CD4-positive, alpha-beta T cell (primary cell): ENCODE measurements at regions of chr12 and their contacts with region 1.

Region 1: GRCh38 chr12:100266835-100267618 is at the starts of genes DEPDC4 and SCYL2:
- DNase-seq: peak; percentile 88 to 97 (median 93)
- ATAC-seq: peak; percentile 90
- H3K4me3 ChIP-seq: peak within 1 kb of the TSS; percentile 85
- H3K4me3 Mint-ChIP-seq: peak within 1 kb of the TSS; percentile 98
- H3K27ac ChIP-seq: peak within 1 kb of the TSS; percentile 72 to 86
- H3K27ac Mint-ChIP-seq: peak within 1 kb of the TSS; percentile 96
- H3K4me1 ChIP-seq: peaks cover 12% of the 10 kb centered on the region
- H3K4me1 Mint-ChIP-seq: peaks cover 42% of the 10 kb centered on the region
- H3K27me3 ChIP-seq: no peaks in the 10 kb centered on the region
- H3K27me3 Mint-ChIP-seq: no peaks in the 10 kb centered on the region
- CTCF ChIP-seq: no peak
- total RNA-seq, gene DEPDC4: 0.27 to 0.50 TPM
- total RNA-seq, gene SCYL2: 37.5 to 40.8 TPM

Region 2: DNA sequence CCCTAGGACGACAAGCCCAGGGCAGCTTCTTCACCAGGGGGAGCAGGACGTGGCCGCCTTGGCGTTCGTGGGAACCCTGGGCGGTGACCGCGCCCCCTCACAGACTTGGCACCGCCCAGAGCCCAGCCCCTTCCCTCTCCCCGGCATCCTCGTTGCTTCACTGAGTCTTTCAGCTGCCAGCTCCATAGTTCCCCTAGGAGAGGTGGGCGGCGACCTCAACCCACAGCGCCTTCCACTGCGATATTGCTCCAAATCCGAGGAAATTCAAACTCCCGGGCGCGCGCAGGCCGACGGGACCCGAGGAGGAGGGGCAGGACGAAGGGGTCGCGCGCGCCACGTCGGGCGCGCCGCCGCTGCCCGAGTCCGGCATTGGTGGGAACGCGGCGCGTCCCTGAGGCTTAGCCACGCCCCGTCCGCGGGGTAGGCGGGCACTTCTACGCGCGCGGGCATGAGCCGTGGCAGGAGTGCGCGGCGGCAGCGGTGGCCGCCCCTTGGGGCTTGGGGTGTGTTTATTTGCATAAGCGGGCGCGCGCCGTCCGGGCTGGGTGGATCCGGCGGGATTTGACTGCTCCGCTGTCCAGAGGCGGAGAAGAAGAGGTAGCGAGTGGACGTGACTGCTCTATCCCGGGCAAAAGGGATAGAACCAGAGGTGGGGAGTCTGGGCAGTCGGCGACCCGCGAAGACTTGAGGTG is 1622.2 kb before region 1 on chr12 and contains the starts of genes APAF1 and IKBIP:
- CTCF ChIA-PET with region 1: no interaction called
- POLR2A ChIA-PET with region 1: no interaction called
- intact Hi-C with region 1: loop called in 1 of 2 experiments (anchors 10 kb)
- DNase-seq: peak; percentile 91 to 98 (median 97)
- ATAC-seq: peak; percentile 91
- H3K4me3 ChIP-seq: peak within 1 kb of the TSS; percentile 89
- H3K4me3 Mint-ChIP-seq: peak within 1 kb of the TSS; percentile 99
- H3K27ac ChIP-seq: peak within 1 kb of the TSS; percentile 55 to 71
- H3K27ac Mint-ChIP-seq: peak within 1 kb of the TSS; percentile 91
- H3K4me1 ChIP-seq: peaks cover 22% of the 10 kb centered on the region
- H3K4me1 Mint-ChIP-seq: peaks cover 32% of the 10 kb centered on the region
- H3K27me3 ChIP-seq: no peaks in the 10 kb centered on the region
- H3K27me3 Mint-ChIP-seq: no peaks in the 10 kb centered on the region
- CTCF ChIP-seq: no peak
- total RNA-seq, gene APAF1: 13.5 to 14.5 TPM
- total RNA-seq, gene IKBIP: 0.56 to 0.82 TPM

Region 3: DNA sequence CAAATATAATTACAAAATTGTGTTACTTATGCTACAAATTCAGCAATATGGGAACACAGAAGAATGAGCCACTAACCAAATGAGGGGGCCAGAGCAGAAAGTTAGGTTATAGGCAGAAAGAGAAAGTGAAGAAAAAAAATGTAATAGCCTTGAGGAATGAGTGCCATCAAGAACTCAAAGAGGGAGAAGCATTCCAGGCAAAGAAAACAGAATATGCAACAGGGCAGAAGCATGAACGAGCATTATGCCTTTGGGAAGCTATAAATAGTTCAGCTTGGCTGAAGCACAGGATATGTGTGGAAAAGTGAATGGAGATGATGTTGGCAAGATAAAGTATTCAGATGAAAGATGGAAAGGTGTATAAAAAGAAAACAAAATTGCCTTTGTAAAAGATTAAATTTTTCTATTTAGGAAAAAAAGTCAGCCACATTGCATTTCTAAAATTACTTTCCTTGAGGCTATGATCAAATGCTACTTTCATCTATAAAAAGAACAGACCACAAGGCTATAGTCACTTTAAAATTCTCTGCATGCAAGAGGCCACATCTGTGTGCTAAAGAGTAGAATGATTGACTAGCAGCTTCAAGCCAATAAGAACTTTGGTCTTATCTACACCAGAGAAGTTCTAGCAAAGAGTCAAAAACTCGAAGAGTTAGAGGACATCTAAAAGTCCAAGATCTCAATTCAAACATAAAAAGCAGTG is 813.0 kb before region 1 on chr12:
- CTCF ChIA-PET with region 1: no interaction called
- POLR2A ChIA-PET with region 1: no interaction called
- intact Hi-C with region 1: no loop called
- DNase-seq: no peak
- ATAC-seq: no peak
- H3K4me3 ChIP-seq: no peak overlapping the region
- H3K4me3 Mint-ChIP-seq: no peak overlapping the region
- H3K27ac ChIP-seq: no peak overlapping the region
- H3K27ac Mint-ChIP-seq: no peak overlapping the region
- H3K4me1 ChIP-seq: no peaks in the 10 kb centered on the region
- H3K4me1 Mint-ChIP-seq: no peaks in the 10 kb centered on the region
- H3K27me3 ChIP-seq: no peaks in the 10 kb centered on the region
- H3K27me3 Mint-ChIP-seq: no peaks in the 10 kb centered on the region
- CTCF ChIP-seq: no peak

Region 4: DNA sequence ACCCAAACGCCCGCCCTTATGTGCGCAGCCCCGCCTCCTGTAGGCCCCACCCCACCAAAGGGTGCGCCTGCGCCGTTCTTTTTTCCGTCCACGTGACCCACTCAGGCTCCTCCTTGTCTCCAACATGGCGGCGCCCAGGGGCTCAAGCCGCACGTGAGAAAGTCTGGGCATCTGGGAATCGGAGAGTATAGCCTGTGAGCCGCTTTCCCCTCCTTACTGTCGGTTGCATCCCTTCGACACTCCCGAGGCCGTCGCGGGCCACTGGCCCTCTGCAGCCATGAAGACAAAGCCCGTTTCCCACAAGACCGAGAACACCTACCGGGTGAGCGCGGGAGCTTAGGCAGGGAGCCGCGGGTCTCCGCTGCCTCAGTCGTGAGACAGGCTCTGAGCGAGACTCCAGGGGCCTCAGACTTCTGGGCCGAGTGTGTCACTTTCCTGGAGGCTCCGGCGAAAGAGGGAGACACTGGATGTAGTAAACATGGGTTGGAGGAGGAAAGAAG is 1013.0 kb after region 1 on chr12 and contains the start of gene UTP20:
- CTCF ChIA-PET with region 1: no interaction called
- POLR2A ChIA-PET with region 1: interaction called, 7 read pairs
- intact Hi-C with region 1: loop called in 1 of 2 experiments (anchors 2 kb)
- DNase-seq: peak; percentile 89 to 96 (median 94)
- ATAC-seq: peak; percentile 100
- H3K4me3 ChIP-seq: peak within 1 kb of the TSS; percentile 72
- H3K4me3 Mint-ChIP-seq: peak within 1 kb of the TSS; percentile 97
- H3K27ac ChIP-seq: no peak within 1 kb of the TSS
- H3K27ac Mint-ChIP-seq: peak within 1 kb of the TSS; percentile 71
- H3K4me1 ChIP-seq: peaks cover 8% of the 10 kb centered on the region
- H3K4me1 Mint-ChIP-seq: peaks cover 25% of the 10 kb centered on the region
- H3K27me3 ChIP-seq: no peaks in the 10 kb centered on the region
- H3K27me3 Mint-ChIP-seq: peaks cover 13% of the 10 kb centered on the region
- CTCF ChIP-seq: no peak
- total RNA-seq, gene UTP20: 9.1 to 9.6 TPM

Region 5: GRCh38 chr12:101823891-101824290 is 1556.9 kb after region 1 on chr12:
- CTCF ChIA-PET with region 1: no interaction called
- POLR2A ChIA-PET with region 1: no interaction called
- intact Hi-C with region 1: loop called in 1 of 2 experiments (anchors 10 kb)
- DNase-seq: peak; percentile 40 to 90 (median 56)
- ATAC-seq: peak; percentile 99
- H3K4me3 ChIP-seq: no peak overlapping the region
- H3K4me3 Mint-ChIP-seq: peak overlapping the region; percentile 44
- H3K27ac ChIP-seq: no peak overlapping the region
- H3K27ac Mint-ChIP-seq: peak overlapping the region; percentile 83
- H3K4me1 ChIP-seq: peaks cover 47% of the 10 kb centered on the region
- H3K4me1 Mint-ChIP-seq: peaks cover 69% of the 10 kb centered on the region
- H3K27me3 ChIP-seq: no peaks in the 10 kb centered on the region
- H3K27me3 Mint-ChIP-seq: no peaks in the 10 kb centered on the region
- CTCF ChIP-seq: peak; percentile 42